Posterior cingulate gyrus (tissue), 11 donors: ENCODE measurements at regions of chr17 and their contacts with region 1.

Region 1: DNA sequence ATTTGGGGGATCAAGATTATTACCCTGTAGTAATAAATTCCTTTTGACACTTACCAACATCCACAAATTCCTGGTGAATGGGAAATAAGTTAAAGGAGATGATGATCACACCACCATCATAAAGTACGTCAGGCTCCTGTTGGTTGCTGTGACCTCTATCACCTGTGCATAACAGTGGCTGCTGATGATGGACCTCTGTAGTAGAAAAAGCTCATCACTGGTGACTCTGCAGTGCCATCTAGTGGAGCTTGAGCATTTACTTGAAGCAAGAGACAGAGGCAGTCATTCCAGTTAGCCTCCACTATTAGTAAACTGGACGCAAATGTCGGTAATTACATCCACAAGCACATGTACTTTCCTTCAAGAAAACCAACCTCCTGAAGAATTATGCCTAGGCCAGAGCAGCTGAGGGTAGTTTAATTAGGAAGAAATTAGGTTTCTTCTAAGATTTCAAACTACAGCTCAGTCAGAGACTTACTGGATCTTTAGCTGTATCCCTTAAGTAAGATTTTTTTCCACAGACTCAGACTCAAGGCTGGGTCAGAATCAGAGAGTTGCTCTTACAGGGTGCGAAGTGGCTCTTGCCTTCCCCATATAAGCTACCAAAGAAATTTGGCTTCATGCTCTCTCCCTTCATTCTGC is 39.3 kb downstream of the CYB561 start:
- DNase-seq: peak in 5 of 10 donors; percentile 33 to 73 (median 71)

Region 2: DNA sequence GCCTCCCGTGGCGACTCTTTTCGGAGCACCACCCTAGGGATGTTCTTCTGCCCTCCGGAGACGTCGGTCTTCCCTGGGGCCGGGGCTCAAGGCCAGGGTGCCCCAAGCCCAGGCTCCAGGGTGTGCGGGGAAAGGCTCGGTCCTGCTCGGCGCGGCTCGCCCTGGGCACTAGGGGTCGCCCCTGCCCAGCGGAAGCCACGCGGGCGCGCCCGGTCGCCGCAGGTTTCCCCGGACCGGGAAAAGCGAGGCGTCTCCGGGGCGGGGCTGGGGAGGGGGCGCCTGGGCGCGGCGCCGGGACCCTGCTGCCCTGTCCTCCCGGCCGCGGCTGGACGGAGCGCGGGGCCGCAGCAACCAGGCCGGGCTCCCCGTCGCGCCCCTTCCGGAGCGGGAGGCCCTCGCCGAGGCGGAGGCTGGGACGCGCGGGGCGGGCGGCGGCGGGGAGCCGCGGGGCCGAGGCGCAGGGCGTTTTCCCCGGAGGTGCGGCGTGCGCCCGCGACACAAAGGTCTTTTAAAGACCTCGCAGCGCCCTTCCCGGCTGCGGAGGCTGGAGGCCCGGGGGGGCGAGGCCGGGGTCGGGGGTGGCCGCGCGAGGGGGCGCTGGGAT is 702.9 kb before region 1 on chr17:
- intact Hi-C with region 1: loop called (anchors 5 kb)
- DNase-seq: peak; percentile 66 to 97 (median 80)

Region 3: DNA sequence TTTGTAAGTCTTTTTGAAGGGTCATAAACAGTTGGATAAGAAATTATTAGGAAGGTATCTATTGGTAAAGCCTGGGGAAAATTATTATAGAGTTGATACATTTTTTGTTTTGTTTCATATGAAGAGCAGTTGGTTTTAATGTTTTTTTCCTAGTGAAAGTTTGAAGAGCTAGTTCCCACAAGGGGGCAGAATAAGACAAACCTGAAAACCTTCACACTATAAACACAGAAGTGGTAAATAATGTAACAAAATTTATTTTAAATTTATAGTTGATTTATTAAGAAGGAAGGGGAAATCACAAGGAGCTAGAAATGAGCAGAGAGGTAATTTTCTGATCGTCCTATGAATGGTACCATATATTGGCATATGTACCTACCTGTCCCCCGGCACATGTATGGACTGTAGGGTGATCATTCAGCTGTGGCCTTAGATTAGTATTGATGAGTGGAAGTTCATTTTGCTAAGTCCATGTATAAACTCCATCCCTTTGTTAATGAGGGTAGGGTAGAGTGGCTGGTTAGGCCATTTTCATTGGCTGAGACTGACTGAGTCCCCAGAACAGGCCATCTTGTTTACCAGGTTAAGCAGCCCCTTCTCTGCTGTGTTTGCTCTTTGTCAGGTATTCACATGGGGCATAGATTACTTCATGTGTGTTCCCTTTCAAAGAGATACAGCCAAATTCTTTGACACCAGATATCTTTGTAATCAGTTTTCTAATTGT is 324.4 kb before region 1 on chr17:
- intact Hi-C with region 1: loop called (anchors 1 kb)
- DNase-seq: no peak

Region 4: DNA sequence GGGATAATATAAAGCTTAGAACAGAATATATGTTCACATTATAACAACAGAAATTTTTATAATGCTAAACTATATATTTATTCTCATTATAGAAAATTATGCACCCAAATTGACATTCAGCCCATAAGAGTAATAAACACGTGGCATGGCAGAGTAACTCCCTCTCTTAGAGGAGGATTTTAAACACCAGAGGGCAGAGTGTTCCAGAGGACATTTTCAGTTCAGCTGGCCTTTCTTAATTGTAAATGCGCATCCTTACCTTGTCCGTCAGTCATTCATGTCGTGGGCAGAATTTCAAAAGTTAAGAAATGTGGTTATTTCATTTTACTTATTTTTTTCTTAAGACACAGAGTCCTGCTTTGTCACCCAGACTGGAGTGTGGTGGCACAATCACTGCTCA is 293.6 kb before region 1 on chr17:
- intact Hi-C with region 1: loop called (anchors 2 kb)
- DNase-seq: no peak